K562 (cell line): ENCODE measurements at regions of chr14 and their contacts with region 1.

Region 1: DNA sequence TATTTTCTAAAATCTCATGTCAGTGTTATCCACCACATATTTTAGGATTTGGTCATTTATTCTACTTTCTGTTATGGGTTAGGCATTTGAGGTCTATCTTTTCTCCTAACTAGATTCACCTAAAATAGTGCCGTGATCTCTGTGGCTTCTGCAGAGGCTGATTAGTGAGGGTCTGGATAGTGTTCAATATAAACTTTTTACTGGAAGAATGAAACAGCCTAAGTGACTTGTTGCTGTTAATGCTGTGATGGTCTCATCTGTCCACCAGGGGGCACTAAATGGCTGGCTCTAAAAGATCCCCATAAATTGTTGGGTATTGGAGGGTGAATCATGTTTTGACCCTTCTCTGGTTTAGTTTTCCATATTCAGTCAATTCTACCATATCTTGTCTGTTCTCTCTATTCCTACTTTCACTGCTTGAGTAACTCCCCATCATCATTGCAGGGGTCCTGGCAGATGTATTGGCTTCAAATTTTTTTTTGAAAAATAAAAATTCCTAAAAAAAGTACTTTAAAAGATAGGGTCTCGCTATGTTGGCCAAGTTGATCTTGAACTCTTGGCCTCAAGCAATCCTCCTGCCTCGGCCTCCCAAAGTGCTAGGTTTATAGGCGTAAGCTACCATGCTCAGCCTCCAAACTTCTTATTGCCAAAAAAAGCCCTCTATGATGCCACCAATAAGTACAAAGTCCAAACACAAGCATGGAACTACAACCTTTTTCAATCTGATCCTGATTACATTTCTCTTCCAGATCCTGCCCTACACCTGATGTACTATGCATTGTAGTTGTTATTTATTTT is 6.9 kb downstream of the PABPN1 start:
- DNase-seq: peak; percentile 66 to 83 (median 74)
- ATAC-seq: peak; percentile 83
- H3K4me3 ChIP-seq: no peak overlapping the region
- H3K27ac ChIP-seq: no peak overlapping the region
- H3K4me1 ChIP-seq: peaks cover 2 to 3% of the 10 kb centered on the region in 2 experiments; a peak in 4 of 5 replicates
- H3K27me3 ChIP-seq: no peaks in the 10 kb centered on the region
- CTCF ChIP-seq: peak; percentile 81 to 94 (median 82)
- EP300 ChIP-seq: no peak
- POLR2A ChIP-seq: no peak
- RAD21 ChIP-seq: peak; percentile 91 to 95

Region 2: DNA sequence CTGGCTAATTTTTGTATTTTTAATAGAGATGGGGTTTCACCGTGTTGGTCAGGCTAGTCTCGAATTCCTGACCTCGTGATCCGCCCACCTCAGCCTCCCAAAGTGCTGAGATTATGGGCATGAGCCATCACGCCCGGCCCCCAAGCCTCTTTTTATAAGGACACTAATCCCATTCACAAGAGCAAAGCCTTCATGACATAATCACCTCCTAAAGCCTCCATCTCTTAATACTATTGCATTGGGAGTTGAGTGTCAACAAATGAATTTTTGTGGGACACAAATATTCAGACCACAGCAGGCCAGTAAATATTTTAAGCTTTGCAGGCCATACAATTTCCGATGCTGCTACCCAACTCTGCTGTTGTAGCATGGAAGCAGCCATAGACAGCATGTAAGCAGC is 79.5 kb before region 1 on chr14:
- CTCF ChIA-PET with region 1: no interaction called
- POLR2A ChIA-PET with region 1: no interaction called
- in situ Hi-C with region 1: no loop called
- intact Hi-C with region 1: no loop called
- DNase-seq: no peak
- ATAC-seq: no peak
- H3K4me3 ChIP-seq: no peak overlapping the region
- H3K27ac ChIP-seq: no peak overlapping the region
- H3K4me1 ChIP-seq: no peaks in the 10 kb centered on the region; a peak in 3 of 5 replicates
- H3K27me3 ChIP-seq: no peaks in the 10 kb centered on the region; a peak in 1 of 5 replicates
- CTCF ChIP-seq: no peak
- EP300 ChIP-seq: no peak
- POLR2A ChIP-seq: no peak
- RAD21 ChIP-seq: no peak

Region 3: DNA sequence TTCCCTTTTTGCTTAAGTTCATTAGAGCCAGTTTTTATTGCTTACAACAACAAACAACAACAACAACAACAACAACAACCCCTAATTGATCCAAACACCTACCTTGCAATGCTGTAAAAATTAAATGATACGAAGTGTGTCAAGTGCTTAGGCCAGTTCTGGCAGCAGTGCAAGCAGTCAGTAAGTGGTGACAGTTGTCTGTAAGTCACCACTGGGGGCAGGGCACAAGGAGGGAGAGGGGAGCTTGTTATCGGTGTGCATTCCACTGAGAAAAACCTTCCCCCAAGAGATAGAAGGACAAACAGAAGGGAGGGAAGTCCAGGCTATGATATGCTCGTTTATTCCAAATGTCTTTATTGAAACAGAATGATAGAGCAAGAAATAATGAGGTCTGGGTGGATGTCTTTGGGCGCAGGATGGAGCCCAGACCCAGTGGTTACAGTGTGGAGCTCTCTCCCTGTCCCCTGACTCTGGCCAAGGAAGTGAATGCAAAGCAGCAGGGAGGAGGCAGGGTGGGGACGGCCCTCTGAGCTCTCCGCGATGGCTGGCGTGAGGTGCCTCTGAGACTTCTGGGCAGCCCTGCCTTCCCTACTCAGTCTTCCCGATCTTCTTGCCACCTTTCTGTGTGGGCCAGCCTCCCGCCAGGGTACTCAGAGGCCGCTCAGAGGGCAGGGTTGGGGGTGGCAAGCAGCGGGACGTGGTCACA is 18.0 kb after region 1 on chr14:
- CTCF ChIA-PET with region 1: no interaction called
- POLR2A ChIA-PET with region 1: interaction called, 11 read pairs
- in situ Hi-C with region 1: no loop called
- intact Hi-C with region 1: no loop called
- DNase-seq: peak; percentile 60 to 75 (median 68)
- ATAC-seq: peak; percentile 96
- H3K4me3 ChIP-seq: no peak overlapping the region
- H3K27ac ChIP-seq: peak overlapping the region; percentile 48; the same call in 1 of the 3 replicates
- H3K4me1 ChIP-seq: peaks cover 11 to 16% of the 10 kb centered on the region in 2 experiments; a peak in 4 of 5 replicates
- H3K27me3 ChIP-seq: peaks cover under 1 to 3% of the 10 kb centered on the region in 2 experiments; a peak in 1 of 5 replicates
- CTCF ChIP-seq: peak; percentile 48 to 70 (median 51)
- EP300 ChIP-seq: no peak
- POLR2A ChIP-seq: no peak
- RAD21 ChIP-seq: no peak

Region 4: GRCh38 chr14:23360496-23360895 is 32.4 kb after region 1 on chr14:
- CTCF ChIA-PET with region 1: no interaction called
- POLR2A ChIA-PET with region 1: interaction called, 3 read pairs
- in situ Hi-C with region 1: no loop called
- intact Hi-C with region 1: loop called (anchors 2 kb)
- DNase-seq: peak; percentile 14 to 50 (median 30)
- ATAC-seq: peak; percentile 80
- H3K4me3 ChIP-seq: no peak overlapping the region
- H3K27ac ChIP-seq: no peak overlapping the region
- H3K4me1 ChIP-seq: peaks cover 0 to 13% of the 10 kb centered on the region in 2 experiments; a peak in 3 of 5 replicates
- H3K27me3 ChIP-seq: peaks cover 6 to 62% of the 10 kb centered on the region in 2 experiments; a peak in 4 of 5 replicates
- CTCF ChIP-seq: peak; percentile 51 to 77 (median 52)
- EP300 ChIP-seq: no peak
- POLR2A ChIP-seq: no peak
- RAD21 ChIP-seq: peak in 1 of 2 experiments; percentile 46; a peak in 2 of 4 replicates

Region 5: GRCh38 chr14:23379366-23380196 is 51.4 kb after region 1 on chr14:
- CTCF ChIA-PET with region 1: interaction called, 16 read pairs
- POLR2A ChIA-PET with region 1: no interaction called
- in situ Hi-C with region 1: no loop called
- intact Hi-C with region 1: loop called (anchors 1 kb)
- DNase-seq: peak; percentile 63 to 79 (median 72)
- ATAC-seq: peak; percentile 92
- H3K4me3 ChIP-seq: no peak overlapping the region
- H3K27ac ChIP-seq: no peak overlapping the region
- H3K4me1 ChIP-seq: peaks cover 0 to 19% of the 10 kb centered on the region in 2 experiments; a peak in 2 of 5 replicates
- H3K27me3 ChIP-seq: peaks cover 2 to 61% of the 10 kb centered on the region in 2 experiments; a peak in 4 of 5 replicates
- CTCF ChIP-seq: peak; percentile 86 to 93 (median 89)
- EP300 ChIP-seq: no peak
- POLR2A ChIP-seq: no peak
- RAD21 ChIP-seq: peak; percentile 84 to 94